A549 (cell line): ENCODE measurements at regions of chr2 and their contacts with region 1.

Region 1: DNA sequence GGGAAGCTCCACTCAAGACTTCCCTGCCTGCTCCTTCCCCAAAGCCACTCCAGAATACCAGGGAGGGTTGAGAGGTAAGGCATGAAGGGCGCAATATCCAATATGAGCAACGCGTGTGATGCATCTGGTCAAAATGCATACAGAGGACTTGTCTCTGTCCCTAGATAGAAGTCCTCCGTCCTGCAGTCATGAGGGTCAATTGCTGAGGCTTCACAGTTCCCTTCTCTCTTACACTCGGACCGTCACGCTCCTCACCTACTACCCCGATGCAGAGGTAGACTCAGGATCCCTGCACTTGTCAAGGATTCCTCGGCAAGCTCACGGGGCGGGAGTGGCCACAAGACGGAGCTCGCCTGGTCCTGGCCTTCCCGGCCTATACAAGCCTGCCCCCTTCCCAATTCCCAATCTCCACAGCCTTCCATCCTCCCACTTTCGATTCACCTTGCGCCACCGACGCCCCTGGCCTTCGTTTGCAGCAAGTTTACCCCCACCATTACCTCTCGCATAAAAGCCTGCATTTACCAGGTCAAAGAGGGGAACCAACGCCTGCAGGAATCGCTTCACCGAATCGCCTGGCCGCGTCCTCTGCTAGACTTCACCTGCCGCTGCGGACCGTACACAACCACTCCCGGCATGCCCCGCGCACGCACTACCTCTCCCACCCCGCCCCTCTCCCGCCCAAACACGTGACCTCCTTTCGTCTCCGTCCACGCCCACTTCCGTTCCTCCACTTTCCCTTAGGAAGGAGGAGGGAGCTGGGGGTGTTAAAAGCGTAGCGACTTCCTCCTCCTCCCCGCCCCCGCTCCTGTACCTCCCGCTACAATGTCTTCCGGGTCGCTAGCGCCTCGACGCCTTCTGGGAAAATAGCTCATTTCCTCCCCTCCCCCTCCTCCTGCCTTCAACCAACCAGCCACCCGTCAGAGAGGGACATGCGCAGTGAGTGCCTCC is at the start of gene ORC4:
- DNase-seq: peak; percentile 83 to 99
- ATAC-seq: peak; percentile 90 to 95
- H3K4me3 ChIP-seq: peak within 1 kb of the TSS; percentile 82
- H3K27ac ChIP-seq: peak within 1 kb of the TSS; percentile 93 to 97
- H3K4me1 ChIP-seq: peaks cover 30% of the 10 kb centered on the region; the same call in 2 of the 3 replicates
- CTCF ChIP-seq: peak; percentile 56
- EP300 ChIP-seq: no peak
- POLR2A ChIP-seq: peak; percentile 93
- RAD21 ChIP-seq: peak in 1 of 2 experiments; percentile 46; a peak in 2 of 5 replicates
- polyA plus RNA-seq, gene ORC4: 60.4 and 99.1 TPM in 2 replicates

Region 2: GRCh38 chr2:147843864-147844696 is 176.3 kb before region 1 on chr2:
- CTCF ChIA-PET with region 1: no interaction called
- POLR2A ChIA-PET with region 1: interaction called, 19 read pairs
- DNase-seq: peak; percentile 77 to 87
- ATAC-seq: peak; percentile 94 to 97
- H3K4me3 ChIP-seq: peak overlapping the region; percentile 81
- H3K27ac ChIP-seq: peak overlapping the region; percentile 92 to 97
- H3K4me1 ChIP-seq: peaks cover 14% of the 10 kb centered on the region; the same call in 2 of the 3 replicates
- CTCF ChIP-seq: 0 out of 3 replicates have a peak, but pooled peaks have one; percentile 6
- EP300 ChIP-seq: no peak
- POLR2A ChIP-seq: peak; percentile 44
- RAD21 ChIP-seq: no peak; a peak in 1 of 5 replicates

Region 3: DNA sequence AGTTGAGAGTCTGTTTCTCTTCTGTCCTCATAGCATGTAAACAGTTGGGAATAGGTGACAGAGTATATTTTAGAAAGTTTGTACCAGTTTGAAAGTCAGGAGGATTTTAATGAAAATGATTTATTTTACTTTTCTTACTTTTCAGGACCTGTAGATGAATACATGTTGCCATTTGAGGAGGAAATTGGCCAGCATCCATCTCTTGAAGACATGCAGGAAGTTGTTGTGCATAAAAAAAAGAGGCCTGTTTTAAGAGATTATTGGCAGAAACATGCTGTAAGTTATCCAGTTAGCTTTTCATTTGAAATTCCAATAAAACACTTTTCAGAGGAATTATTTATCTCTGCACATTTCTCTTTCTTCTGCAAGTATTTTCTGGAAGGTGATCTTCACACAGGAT is 94.5 kb before region 1 on chr2:
- CTCF ChIA-PET with region 1: no interaction called
- POLR2A ChIA-PET with region 1: no interaction called
- DNase-seq: no peak
- ATAC-seq: no peak
- H3K4me3 ChIP-seq: no peak overlapping the region
- H3K27ac ChIP-seq: no peak overlapping the region
- H3K4me1 ChIP-seq: no peaks in the 10 kb centered on the region
- CTCF ChIP-seq: no peak
- EP300 ChIP-seq: no peak
- POLR2A ChIP-seq: no peak
- RAD21 ChIP-seq: no peak

Region 4: GRCh38 chr2:148071351-148071750 is 51.0 kb after region 1 on chr2:
- CTCF ChIA-PET with region 1: no interaction called
- POLR2A ChIA-PET with region 1: interaction called, 18 read pairs
- DNase-seq: no peak
- ATAC-seq: no peak
- H3K4me3 ChIP-seq: no peak overlapping the region
- H3K27ac ChIP-seq: no peak overlapping the region
- H3K4me1 ChIP-seq: no peaks in the 10 kb centered on the region
- CTCF ChIP-seq: no peak
- EP300 ChIP-seq: no peak
- POLR2A ChIP-seq: no peak
- RAD21 ChIP-seq: no peak

Region 5: GRCh38 chr2:148177559-148177958 is 157.2 kb after region 1 on chr2:
- CTCF ChIA-PET with region 1: no interaction called
- POLR2A ChIA-PET with region 1: interaction called, 11 read pairs
- DNase-seq: no peak
- ATAC-seq: no peak
- H3K4me3 ChIP-seq: no peak overlapping the region
- H3K27ac ChIP-seq: no peak overlapping the region
- H3K4me1 ChIP-seq: no peaks in the 10 kb centered on the region
- CTCF ChIP-seq: no peak
- EP300 ChIP-seq: no peak
- POLR2A ChIP-seq: no peak
- RAD21 ChIP-seq: no peak

Region 6: DNA sequence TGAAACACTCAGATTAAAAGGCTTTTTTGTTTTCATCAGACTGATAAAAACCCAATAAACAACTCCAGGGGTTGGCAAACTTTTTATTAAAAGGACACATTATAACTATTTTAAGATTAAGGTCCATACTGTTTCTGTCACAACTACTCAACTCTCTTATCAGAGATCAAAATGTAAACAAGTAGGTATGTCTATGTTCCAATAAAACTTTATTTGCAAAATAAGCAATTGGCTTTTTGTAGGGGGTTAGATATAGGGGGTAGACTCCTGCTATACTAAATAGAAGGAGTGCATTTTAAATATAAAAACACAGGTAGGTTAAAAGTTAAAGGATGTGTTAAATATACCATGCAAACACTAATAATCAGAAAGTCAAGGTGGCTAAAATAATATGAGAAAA is 174.5 kb after region 1 on chr2:
- CTCF ChIA-PET with region 1: no interaction called
- POLR2A ChIA-PET with region 1: no interaction called
- DNase-seq: no peak
- ATAC-seq: no peak
- H3K4me3 ChIP-seq: no peak overlapping the region
- H3K27ac ChIP-seq: no peak overlapping the region
- H3K4me1 ChIP-seq: no peaks in the 10 kb centered on the region
- CTCF ChIP-seq: no peak
- EP300 ChIP-seq: no peak
- POLR2A ChIP-seq: no peak
- RAD21 ChIP-seq: no peak

Region 7: GRCh38 chr2:148509288-148509902 is 489.0 kb after region 1 on chr2:
- CTCF ChIA-PET with region 1: interaction called, 6 read pairs
- POLR2A ChIA-PET with region 1: interaction called, 22 read pairs
- DNase-seq: peak; percentile 81 to 87
- ATAC-seq: peak; percentile 100
- H3K4me3 ChIP-seq: peak overlapping the region; percentile 39
- H3K27ac ChIP-seq: peak overlapping the region; percentile 4 to 68; a peak in 5 of 6 replicates
- H3K4me1 ChIP-seq: no peaks in the 10 kb centered on the region
- CTCF ChIP-seq: peak; percentile 90
- EP300 ChIP-seq: no peak
- POLR2A ChIP-seq: no peak
- RAD21 ChIP-seq: peak; percentile 90 to 95